CD4-positive, alpha-beta memory T cell (primary cell): ENCODE measurements at regions of chr11 and their contacts with region 1.

Region 1: DNA sequence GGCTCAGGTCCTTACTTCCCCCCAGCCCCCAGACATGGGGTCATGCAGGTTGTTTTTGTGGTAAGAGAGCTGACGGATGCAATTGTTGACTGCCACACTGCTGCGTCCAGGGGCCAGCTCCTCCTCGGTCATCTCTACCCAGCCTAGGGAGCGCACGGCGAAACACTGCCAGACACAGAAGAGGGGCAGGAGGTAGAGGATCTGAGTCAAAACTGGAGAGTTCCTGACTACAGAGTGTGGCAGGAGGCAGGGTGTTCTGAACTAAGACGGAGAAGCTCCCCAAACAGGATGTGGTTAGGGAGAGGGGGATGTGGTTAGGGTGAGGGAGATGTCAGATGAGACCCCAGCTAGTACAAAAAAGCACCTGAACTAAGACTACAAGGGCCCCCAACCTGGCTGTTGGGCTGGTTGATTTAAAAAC is 12.3 kb downstream of the SMPD1 start:
- DNase-seq: peak; percentile 89 to 95 (median 90)
- H3K4me3 ChIP-seq: peak overlapping the region; percentile 40 to 53
- H3K4me3 Mint-ChIP-seq: peak overlapping the region; percentile 80 to 98 (median 84)
- H3K27ac ChIP-seq: peak overlapping the region; percentile 69
- H3K27ac Mint-ChIP-seq: peak overlapping the region; percentile 96 to 99 (median 97)
- H3K4me1 ChIP-seq: peaks cover 72% of the 10 kb centered on the region
- H3K4me1 Mint-ChIP-seq: peaks cover 62 to 98% (median 80%) of the 10 kb centered on the region in 4 donors
- H3K27me3 ChIP-seq: no peaks in the 10 kb centered on the region
- H3K27me3 Mint-ChIP-seq: no peaks in the 10 kb centered on the region

Region 2: DNA sequence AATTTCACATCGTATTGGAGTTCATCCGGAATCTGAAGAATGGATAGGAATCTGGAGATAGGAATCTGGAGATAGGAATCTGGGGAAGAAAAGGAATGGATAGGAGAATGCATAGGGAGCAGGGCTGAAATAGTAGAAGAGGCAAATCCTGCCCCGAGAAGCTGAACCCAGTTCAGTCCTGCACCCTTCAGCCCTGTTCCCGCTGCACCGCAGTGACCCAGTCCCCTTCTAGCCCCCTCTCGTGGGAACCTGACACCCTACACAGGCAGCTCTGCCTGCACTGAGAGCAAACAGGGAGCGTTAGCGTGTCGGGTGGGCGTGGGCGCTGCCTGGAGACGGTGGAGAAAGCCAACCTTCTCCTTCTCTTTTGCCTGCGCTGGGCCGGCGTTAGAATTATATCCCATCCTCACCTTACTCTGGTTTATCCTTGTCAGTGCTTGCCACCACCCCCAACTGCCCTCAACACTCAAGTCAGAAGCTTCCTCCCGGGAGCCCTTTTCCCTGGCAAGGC is 143.9 kb before region 1 on chr11:
- CTCF ChIA-PET with region 1: no interaction called
- POLR2A ChIA-PET with region 1: no interaction called
- intact Hi-C with region 1: no loop called
- DNase-seq: no peak
- H3K4me3 ChIP-seq: peak overlapping the region in 1 of 2 donors; percentile 23
- H3K4me3 Mint-ChIP-seq: peak overlapping the region; percentile 73 to 86 (median 83)
- H3K27ac ChIP-seq: no peak overlapping the region
- H3K27ac Mint-ChIP-seq: no peak overlapping the region
- H3K4me1 ChIP-seq: peaks cover 11% of the 10 kb centered on the region
- H3K4me1 Mint-ChIP-seq: peaks cover 0 to 11% (median 5%) of the 10 kb centered on the region in 4 donors
- H3K27me3 ChIP-seq: peaks cover 21% of the 10 kb centered on the region
- H3K27me3 Mint-ChIP-seq: peaks cover 8 to 11% of the 10 kb centered on the region in 2 donors

Region 3: GRCh38 chr11:6413791-6414201 is 11.2 kb after region 1 on chr11:
- CTCF ChIA-PET with region 1: interaction called, 40 read pairs
- POLR2A ChIA-PET with region 1: interaction called, 503 read pairs
- intact Hi-C with region 1: loop called (anchors 1 kb)
- DNase-seq: peak; percentile 66 to 82 (median 73)
- H3K4me3 ChIP-seq: peak overlapping the region in 1 of 2 donors; percentile 18
- H3K4me3 Mint-ChIP-seq: no peak overlapping the region
- H3K27ac ChIP-seq: peak overlapping the region; percentile 13
- H3K27ac Mint-ChIP-seq: no peak overlapping the region
- H3K4me1 ChIP-seq: peaks cover 71% of the 10 kb centered on the region
- H3K4me1 Mint-ChIP-seq: peaks cover 17 to 21% (median 20%) of the 10 kb centered on the region in 4 donors
- H3K27me3 ChIP-seq: no peaks in the 10 kb centered on the region
- H3K27me3 Mint-ChIP-seq: no peaks in the 10 kb centered on the region

Region 4: GRCh38 chr11:6481012-6481923 is 78.7 kb after region 1 on chr11 and contains the starts of genes ARFIP2 and TIMM10B:
- CTCF ChIA-PET with region 1: interaction called, 5 read pairs
- POLR2A ChIA-PET with region 1: interaction called, 30 read pairs
- intact Hi-C with region 1: no loop called
- DNase-seq: peak; percentile 93 to 98 (median 95)
- H3K4me3 ChIP-seq: peak within 1 kb of the TSS; percentile 83 to 97
- H3K4me3 Mint-ChIP-seq: peak within 1 kb of the TSS; percentile 93 to 98 (median 96)
- H3K27ac ChIP-seq: peak within 1 kb of the TSS; percentile 90
- H3K27ac Mint-ChIP-seq: peak within 1 kb of the TSS; percentile 95 to 99 (median 98)
- H3K4me1 ChIP-seq: peaks cover 46% of the 10 kb centered on the region
- H3K4me1 Mint-ChIP-seq: peaks cover 26 to 44% (median 36%) of the 10 kb centered on the region in 4 donors
- H3K27me3 ChIP-seq: no peaks in the 10 kb centered on the region
- H3K27me3 Mint-ChIP-seq: no peaks in the 10 kb centered on the region
- total RNA-seq, gene ARFIP2: 53.9 to 56.9 TPM
- total RNA-seq, gene TIMM10B: 54.7 to 60.3 TPM